Motor neuron (in vitro differentiated cells): ENCODE measurements at regions of chr12 and their contacts with region 1.

Region 1: GRCh38 chr12:63439774-63440447 is 228.4 kb downstream of the DPY19L2 start:
- ATAC-seq: peak in 3 of 8 experiments; percentile 28 to 40 (median 31)
- H3K4me3 ChIP-seq: no peak overlapping the region
- H3K27ac ChIP-seq: no peak overlapping the region
- H3K4me1 ChIP-seq: no peaks in the 10 kb centered on the region

Region 2: GRCh38 chr12:62347922-62348650 is 1091.8 kb before region 1 on chr12:
- in situ Hi-C with region 1: no loop called
- ATAC-seq: peak in 3 of 8 experiments; percentile 74 to 84 (median 81)
- H3K4me3 ChIP-seq: no peak overlapping the region
- H3K27ac ChIP-seq: no peak overlapping the region
- H3K4me1 ChIP-seq: no peaks in the 10 kb centered on the region

Region 3: GRCh38 chr12:63238892-63239291 is 201.0 kb before region 1 on chr12:
- in situ Hi-C with region 1: no loop called
- ATAC-seq: peak in 2 of 8 experiments; percentile 30 to 53
- H3K4me3 ChIP-seq: no peak overlapping the region
- H3K27ac ChIP-seq: no peak overlapping the region
- H3K4me1 ChIP-seq: no peaks in the 10 kb centered on the region

Region 4: DNA sequence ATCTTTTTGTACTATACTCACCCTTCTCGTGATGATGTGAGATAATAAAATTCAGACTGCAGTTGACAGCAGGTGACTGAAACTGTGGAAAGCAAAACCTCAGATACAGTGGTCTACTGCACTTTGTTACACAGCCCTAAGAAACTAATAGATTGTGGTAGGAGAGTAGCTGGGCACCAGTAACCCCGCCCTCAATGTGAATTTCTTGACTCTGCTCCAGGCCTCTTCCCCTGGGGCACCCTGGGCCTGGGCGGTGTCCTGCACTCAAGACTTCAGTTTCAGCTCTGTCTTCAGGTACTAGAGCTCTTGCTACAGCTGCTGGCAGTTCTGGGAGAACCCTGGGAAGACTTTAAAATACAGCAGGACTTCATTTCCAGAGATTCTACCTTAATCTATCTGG is 91.4 kb before region 1 on chr12:
- in situ Hi-C with region 1: loop called in 1 of 9 experiments (anchors 25 kb)
- ATAC-seq: peak in 2 of 8 experiments; percentile 66 to 83
- H3K4me3 ChIP-seq: no peak overlapping the region
- H3K27ac ChIP-seq: no peak overlapping the region
- H3K4me1 ChIP-seq: no peaks in the 10 kb centered on the region